ENCODE measurements at regions of chrX and their contacts with region 1.

Region 1: GRCh38 chrX:119468930-119469635 is 839 bp downstream of the SLC25A5 start:
- DNase-seq: peak; percentile 73 to 94
- H3K4me3 ChIP-seq: peak overlapping the region; percentile 92
- H3K27ac ChIP-seq: peak overlapping the region; percentile 78
- H3K4me1 ChIP-seq: peaks cover 5% of the 10 kb centered on the region
- H3K27me3 ChIP-seq: no peaks in the 10 kb centered on the region
- CTCF ChIP-seq: peak; percentile 80

Region 2: DNA sequence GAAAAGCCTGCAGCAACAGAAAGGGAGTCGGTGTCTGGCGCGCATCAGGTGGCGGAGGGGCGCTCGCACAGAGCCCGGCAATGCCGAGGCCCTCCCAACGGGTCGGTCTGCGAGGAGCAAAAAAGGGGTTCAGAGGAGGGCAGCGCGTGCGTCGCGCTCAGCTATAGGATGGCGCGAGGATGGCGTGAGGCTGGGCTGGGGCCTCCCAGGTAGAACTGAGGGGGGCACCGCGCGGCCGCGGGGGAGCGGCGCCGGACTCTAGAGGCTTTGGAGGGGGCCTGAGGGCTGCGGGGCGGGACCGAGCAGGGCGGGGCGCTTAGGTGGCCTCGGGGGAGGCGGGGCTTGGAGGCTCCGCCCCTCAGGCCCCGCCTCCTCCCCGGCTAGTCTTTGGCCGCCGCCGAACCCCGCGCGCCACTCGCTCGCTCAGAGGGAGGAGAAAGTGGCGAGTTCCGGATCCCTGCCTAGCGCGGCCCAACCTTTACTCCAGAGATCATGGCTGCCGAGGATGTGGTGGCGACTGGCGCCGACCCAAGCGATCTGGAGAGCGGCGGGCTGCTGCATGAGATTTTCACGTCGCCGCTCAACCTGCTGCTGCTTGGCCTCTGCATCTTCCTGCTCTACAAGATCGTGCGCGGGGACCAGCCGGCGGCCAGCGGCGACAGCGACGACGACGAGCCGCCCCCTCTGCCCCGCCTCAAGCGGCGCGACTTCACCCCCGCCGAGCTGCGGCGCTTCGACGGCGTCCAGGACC is 233.0 kb before region 1 on chrX and contains the start of gene PGRMC1:
- CTCF ChIA-PET with region 1: no interaction called
- POLR2A ChIA-PET with region 1: no interaction called
- intact Hi-C with region 1: loop called (anchors 1 kb)
- DNase-seq: peak; percentile 73 to 87
- H3K4me3 ChIP-seq: peak within 1 kb of the TSS; percentile 94
- H3K27ac ChIP-seq: peak within 1 kb of the TSS; percentile 33
- H3K4me1 ChIP-seq: peaks cover 35% of the 10 kb centered on the region
- H3K27me3 ChIP-seq: no peaks in the 10 kb centered on the region
- CTCF ChIP-seq: no peak
- total RNA-seq, gene PGRMC1: 133 and 204 TPM in 2 replicates

Region 3: DNA sequence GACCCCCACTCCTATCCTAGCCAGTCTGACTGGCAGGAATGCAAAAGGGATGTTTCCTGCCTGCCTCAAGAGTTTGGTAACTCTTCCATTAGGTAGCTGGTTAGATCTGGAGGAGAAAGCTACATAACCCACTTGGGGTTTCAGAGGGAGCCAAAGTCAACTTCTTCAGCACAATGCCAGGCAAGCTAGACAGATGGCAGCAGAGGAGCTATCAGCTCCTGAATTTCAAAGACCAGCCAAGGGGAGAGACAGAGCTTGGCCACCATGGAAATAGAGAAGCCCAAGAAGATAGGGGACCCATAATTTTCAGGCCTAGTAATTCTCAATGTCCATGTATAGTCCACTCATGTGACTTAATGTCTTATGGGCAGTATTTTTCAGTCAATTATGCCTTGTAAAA is 176.6 kb before region 1 on chrX:
- CTCF ChIA-PET with region 1: no interaction called
- POLR2A ChIA-PET with region 1: no interaction called
- intact Hi-C with region 1: loop called (anchors 5 kb)
- DNase-seq: no peak
- H3K4me3 ChIP-seq: no peak overlapping the region
- H3K27ac ChIP-seq: no peak overlapping the region
- H3K4me1 ChIP-seq: no peaks in the 10 kb centered on the region
- H3K27me3 ChIP-seq: no peaks in the 10 kb centered on the region
- CTCF ChIP-seq: peak; percentile 56

Region 4: DNA sequence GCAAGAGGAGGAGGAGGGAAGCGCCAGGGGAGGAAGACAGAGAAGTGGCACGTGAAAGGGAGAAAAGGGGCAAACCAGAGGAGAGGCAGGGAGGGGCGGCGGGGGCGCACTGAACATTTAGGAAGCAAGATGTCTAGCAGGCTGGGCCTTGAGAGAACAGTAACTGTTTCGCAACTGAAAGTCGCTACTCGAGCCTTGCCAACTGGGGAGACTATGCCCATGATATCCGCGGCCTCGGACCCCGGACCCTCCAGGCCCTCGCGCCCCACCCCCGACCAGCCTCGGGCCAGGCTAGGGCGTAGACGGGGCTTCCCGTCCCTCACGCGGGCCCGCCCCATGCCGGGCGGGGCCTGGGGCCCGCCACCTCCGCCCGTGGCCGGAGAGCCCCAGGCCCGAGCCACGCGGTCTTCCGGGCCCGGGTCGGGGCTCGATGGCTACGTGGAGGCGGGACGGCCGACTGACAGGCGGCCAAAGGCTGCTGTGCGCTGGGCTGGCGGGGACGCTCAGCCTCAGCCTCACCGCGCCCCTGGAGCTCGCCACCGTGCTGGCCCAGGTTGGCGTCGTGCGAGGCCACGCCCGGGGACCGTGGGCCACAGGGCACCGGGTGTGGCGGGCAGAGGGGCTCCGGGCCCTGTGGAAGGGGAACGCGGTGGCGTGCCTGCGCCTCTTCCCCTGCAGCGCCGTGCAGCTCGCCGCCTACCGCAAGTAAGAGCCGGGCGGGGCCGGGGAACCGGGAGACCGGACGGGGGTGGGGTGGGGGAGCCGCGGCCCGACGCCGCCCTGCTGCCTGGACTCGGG is 69.9 kb before region 1 on chrX and contains the start of gene SLC25A43:
- CTCF ChIA-PET with region 1: no interaction called
- POLR2A ChIA-PET with region 1: no interaction called
- intact Hi-C with region 1: loop called (anchors 2 kb)
- DNase-seq: peak in 1 of 2 experiments; percentile 50
- H3K4me3 ChIP-seq: peak within 1 kb of the TSS; percentile 94
- H3K27ac ChIP-seq: 0 out of 2 replicates have a peak within 1 kb of the TSS, but pooled peaks have one; percentile 38
- H3K4me1 ChIP-seq: peaks cover 39% of the 10 kb centered on the region
- H3K27me3 ChIP-seq: no peaks in the 10 kb centered on the region
- CTCF ChIP-seq: no peak
- total RNA-seq, gene SLC25A43: 38.4 and 42.3 TPM in 2 replicates

Region 5: GRCh38 chrX:119482481-119483480 is 13.7 kb after region 1 on chrX:
- CTCF ChIA-PET with region 1: interaction called, 6 read pairs
- POLR2A ChIA-PET with region 1: interaction called, 20 read pairs
- intact Hi-C with region 1: no loop called
- DNase-seq: peak; percentile 70 to 78
- H3K4me3 ChIP-seq: peak overlapping the region; percentile 57; the same call in 1 of the 2 replicates
- H3K27ac ChIP-seq: 0 out of 2 replicates have a peak overlapping the region, but pooled peaks have one; percentile 37
- H3K4me1 ChIP-seq: peaks cover 16% of the 10 kb centered on the region
- H3K27me3 ChIP-seq: no peaks in the 10 kb centered on the region
- CTCF ChIP-seq: peak; percentile 81